ENCODE measurements at regions of chr17 and their contacts with region 1.

Region 1: GRCh38 chr17:57946798-57947358 is 8.3 kb downstream of the CUEDC1 start:
- DNase-seq: peak; percentile 65 to 68 (median 67)
- ATAC-seq: peak; percentile 86
- H3K4me3 ChIP-seq: peak overlapping the region; percentile 3
- H3K4me1 ChIP-seq: peaks cover 25% of the 10 kb centered on the region
- CTCF ChIP-seq: no peak

Region 2: GRCh38 chr17:57892146-57892828 is 54.6 kb before region 1 on chr17:
- intact Hi-C with region 1: loop called in 1 of 2 experiments (anchors 10 kb)
- DNase-seq: peak; percentile 90 to 96 (median 95)
- ATAC-seq: peak; percentile 89
- H3K4me3 ChIP-seq: no peak overlapping the region
- H3K4me1 ChIP-seq: peaks cover 25% of the 10 kb centered on the region
- CTCF ChIP-seq: peak; percentile 98

Region 3: DNA sequence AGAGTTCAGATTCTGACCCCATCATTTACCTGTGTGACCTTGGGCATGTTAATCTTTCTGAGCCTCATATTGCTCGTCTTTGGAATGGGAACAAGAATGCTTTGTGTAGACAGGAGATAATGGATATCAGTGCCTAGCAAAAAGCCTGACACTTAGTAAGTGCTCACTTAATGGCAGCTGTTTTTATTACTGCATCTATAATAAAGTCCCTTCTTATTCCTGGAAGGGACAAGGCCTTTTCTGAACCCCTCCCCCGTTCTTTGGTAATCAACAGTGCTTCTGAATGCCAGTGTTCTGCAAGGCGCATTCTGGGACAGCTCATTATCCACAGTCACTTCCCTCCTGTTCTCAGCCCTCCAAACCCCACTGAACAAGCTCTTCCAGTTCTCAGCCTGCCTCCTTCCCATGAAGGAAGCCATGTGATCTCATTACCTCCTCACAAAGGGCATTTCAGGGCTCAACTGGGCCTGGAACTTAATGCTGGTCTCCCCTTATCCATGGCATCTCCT is 430.3 kb after region 1 on chr17:
- intact Hi-C with region 1: no loop called
- DNase-seq: peak in 2 of 3 donors; percentile 47 to 78
- ATAC-seq: peak; percentile 74
- H3K4me3 ChIP-seq: no peak overlapping the region
- H3K4me1 ChIP-seq: peaks cover 53% of the 10 kb centered on the region
- CTCF ChIP-seq: no peak